ENCODE measurements at regions of chr2 and their contacts with region 1.

Region 1: DNA sequence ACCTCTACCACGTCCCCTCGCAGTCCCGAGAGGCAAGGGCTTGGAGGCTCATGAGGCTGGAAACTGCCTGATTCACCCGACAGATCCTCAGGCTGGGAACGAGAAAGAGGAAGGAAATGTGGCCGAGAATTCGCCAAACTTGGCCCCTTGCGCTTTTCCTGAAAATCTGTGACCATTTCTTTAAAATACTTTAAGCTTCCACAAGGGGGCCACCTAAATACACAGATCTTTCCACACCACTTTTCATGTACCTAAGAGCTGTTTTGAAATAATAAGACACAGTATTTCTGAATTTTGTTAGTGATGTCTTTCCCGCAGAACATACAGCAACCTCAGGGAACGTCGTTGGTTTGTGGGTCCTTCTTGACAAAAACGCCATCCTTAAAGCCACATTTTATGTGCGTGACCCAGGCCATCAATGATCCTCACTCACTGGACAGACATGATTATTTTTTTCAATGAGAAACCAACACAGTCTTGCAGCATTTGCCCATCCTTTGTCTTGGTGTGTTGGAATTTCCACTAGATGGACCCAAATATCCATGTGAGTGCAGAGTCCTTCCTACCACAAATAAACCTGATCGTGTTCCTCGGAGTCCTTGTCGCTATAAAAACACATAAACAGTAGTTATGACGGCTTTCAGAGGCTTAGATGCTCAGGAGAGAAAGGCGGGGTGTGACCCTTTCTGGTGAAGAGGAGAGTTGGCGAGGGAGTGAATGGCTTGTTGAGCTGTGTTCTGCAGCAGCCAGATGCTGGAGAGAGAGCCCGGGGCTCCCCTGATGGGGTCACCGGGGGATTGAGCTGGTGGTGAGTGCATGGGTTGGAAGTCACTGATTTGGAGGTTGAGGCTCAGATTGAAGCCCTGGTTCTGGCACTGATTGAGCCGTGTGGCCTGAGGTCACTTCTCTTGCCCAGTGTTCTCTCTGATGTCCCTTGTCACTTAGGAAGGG is 25.0 kb downstream of the DCDC2C start:
- DNase-seq: peak; percentile 61
- H3K4me3 ChIP-seq: no peak overlapping the region
- H3K27ac ChIP-seq: no peak overlapping the region
- H3K4me1 ChIP-seq: peaks cover 4% of the 10 kb centered on the region
- H3K27me3 ChIP-seq: no peaks in the 10 kb centered on the region
- CTCF ChIP-seq: peak; percentile 34 to 58
- POLR2A ChIP-seq: no peak

Region 2: GRCh38 chr2:3575534-3576262 is 152.7 kb before region 1 on chr2:
- CTCF ChIA-PET with region 1: no interaction called
- POLR2A ChIA-PET with region 1: no interaction called
- dilution Hi-C with region 1: no loop called
- intact Hi-C with region 1: no loop called
- DNase-seq: peak; percentile 27
- H3K4me3 ChIP-seq: peak overlapping the region; percentile 37 to 82 (median 73)
- H3K27ac ChIP-seq: peak overlapping the region; percentile 54
- H3K4me1 ChIP-seq: peaks cover 31% of the 10 kb centered on the region
- H3K27me3 ChIP-seq: no peaks in the 10 kb centered on the region
- CTCF ChIP-seq: no peak
- POLR2A ChIP-seq: no peak

Region 3: DNA sequence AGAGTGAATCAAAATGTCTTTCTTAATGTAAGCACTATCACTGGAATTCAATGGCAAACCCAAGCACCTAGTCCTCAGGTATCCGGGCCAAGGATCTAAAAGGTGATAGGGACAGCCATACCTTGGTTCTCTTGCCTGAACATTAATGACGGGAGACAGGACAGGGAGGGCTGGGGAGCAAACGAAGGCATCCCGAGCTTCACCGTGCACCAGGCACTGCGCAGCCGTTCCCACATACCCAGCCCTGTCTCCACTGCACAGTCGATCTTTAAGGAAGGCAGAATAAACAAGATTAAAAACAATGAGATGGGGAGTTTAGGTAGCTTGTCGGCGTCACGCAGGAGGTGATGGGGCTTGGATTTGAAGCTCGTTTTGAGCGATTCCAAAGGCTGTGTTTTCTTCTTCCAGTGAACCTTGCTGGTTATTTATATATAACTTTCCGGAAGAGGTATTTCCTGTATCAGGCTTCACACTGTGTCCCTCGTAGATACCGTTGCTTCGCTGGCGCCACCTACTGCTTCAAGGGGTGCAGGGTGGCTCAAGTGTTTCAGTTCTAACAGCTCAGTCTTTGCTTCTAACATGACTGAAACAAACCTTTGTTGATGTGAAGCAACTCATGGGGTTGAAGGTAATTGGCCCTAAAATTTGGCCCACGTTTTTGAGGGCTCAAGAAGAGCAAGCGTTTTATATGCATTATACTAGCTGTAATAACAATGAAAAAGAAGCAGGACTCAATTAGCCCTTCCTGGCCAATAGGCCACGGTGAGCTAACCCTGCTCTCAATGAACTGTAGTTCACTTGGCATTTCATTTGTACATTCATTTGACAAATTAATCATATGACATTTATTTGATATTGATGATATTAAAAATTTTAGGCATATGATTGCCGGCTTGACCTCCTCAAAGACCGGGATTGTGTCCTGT is 52.4 kb after region 1 on chr2:
- CTCF ChIA-PET with region 1: interaction called, 21 read pairs
- POLR2A ChIA-PET with region 1: no interaction called
- dilution Hi-C with region 1: no loop called
- intact Hi-C with region 1: loop called (anchors 1 kb)
- DNase-seq: peak; percentile 51
- H3K4me3 ChIP-seq: no peak overlapping the region
- H3K27ac ChIP-seq: no peak overlapping the region
- H3K4me1 ChIP-seq: peaks cover 4% of the 10 kb centered on the region
- H3K27me3 ChIP-seq: no peaks in the 10 kb centered on the region
- CTCF ChIP-seq: peak; percentile 60 to 65
- POLR2A ChIP-seq: no peak

Region 4: GRCh38 chr2:3827673-3828575 is 99.5 kb after region 1 on chr2:
- CTCF ChIA-PET with region 1: interaction called, 17 read pairs
- POLR2A ChIA-PET with region 1: no interaction called
- dilution Hi-C with region 1: no loop called
- intact Hi-C with region 1: loop called (anchors 1 kb)
- DNase-seq: no peak
- H3K4me3 ChIP-seq: no peak overlapping the region
- H3K27ac ChIP-seq: no peak overlapping the region
- H3K4me1 ChIP-seq: no peaks in the 10 kb centered on the region
- H3K27me3 ChIP-seq: no peaks in the 10 kb centered on the region
- CTCF ChIP-seq: peak; percentile 22 to 49
- POLR2A ChIP-seq: no peak

Region 5: DNA sequence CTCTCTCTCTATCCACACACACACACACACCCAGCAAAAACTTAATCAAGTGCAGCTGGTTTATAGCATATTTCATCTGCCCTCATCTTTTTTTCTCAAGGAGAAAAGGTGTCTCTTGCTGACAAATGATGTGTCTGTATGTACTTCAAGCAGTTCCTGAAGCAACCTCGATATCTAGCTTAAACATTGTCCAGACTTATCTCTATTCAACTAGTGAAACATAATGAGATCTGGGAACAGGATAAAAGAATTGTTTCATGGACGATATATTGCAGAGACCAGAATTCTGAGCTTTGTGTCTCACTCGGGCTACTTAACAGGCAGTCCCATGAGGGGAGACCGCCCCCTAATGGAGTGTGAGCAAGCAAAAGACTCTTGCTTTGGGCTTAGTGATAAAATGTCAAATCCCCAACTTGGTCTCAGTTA is 1034.6 kb after region 1 on chr2:
- CTCF ChIA-PET with region 1: interaction called, 40 read pairs
- POLR2A ChIA-PET with region 1: no interaction called
- dilution Hi-C with region 1: no loop called
- intact Hi-C with region 1: loop called (anchors 5 kb)
- DNase-seq: peak; percentile 58
- H3K4me3 ChIP-seq: no peak overlapping the region
- H3K27ac ChIP-seq: no peak overlapping the region
- H3K4me1 ChIP-seq: no peaks in the 10 kb centered on the region
- H3K27me3 ChIP-seq: no peaks in the 10 kb centered on the region
- CTCF ChIP-seq: peak; percentile 56
- POLR2A ChIP-seq: no peak

Measured in endothelial cell of umbilical vein (primary cell).